Calu3 (cell line): ENCODE measurements at regions of chr20 and their contacts with region 1.

Region 1: GRCh38 chr20:5788385-5788895 is 38.2 kb downstream of the SHLD1 start:
- DNase-seq: peak; percentile 66
- H3K4me3 Mint-ChIP-seq: no peak overlapping the region
- H3K27ac Mint-ChIP-seq: no peak overlapping the region
- H3K4me1 Mint-ChIP-seq: no peaks in the 10 kb centered on the region
- H3K27me3 Mint-ChIP-seq: no peaks in the 10 kb centered on the region
- CTCF ChIP-seq: peak; percentile 66

Region 2: GRCh38 chr20:5529331-5530148 is 258.9 kb before region 1 on chr20:
- CTCF ChIA-PET with region 1: interaction called, 3 read pairs
- intact Hi-C with region 1: loop called (anchors 2 kb)
- DNase-seq: peak; percentile 82
- H3K4me3 Mint-ChIP-seq: peak overlapping the region; percentile 40
- H3K27ac Mint-ChIP-seq: no peak overlapping the region
- H3K4me1 Mint-ChIP-seq: peaks cover 8% of the 10 kb centered on the region
- H3K27me3 Mint-ChIP-seq: no peaks in the 10 kb centered on the region
- CTCF ChIP-seq: peak; percentile 37

Region 3: DNA sequence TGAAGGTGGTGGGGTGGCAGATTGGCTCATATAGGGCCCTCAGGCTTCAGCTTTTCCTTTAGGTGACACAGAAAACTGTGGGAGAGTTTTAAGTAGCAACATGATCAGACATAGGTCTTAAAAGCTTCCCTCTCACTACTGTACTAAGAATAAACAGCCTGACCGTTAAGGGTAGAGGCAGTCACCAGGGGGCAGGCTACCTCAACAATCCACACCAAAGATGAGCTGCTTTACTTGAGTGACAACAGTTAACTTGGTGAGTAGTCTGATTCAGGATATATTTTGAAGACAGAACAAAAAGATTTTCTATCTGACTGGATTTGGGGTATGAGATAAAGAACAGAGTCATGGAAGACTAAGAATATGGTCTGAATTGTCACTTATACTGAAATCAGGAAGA is 231.3 kb before region 1 on chr20:
- CTCF ChIA-PET with region 1: interaction called, 17 read pairs
- intact Hi-C with region 1: loop called (anchors 1 kb)
- DNase-seq: peak; percentile 48
- H3K4me3 Mint-ChIP-seq: no peak overlapping the region
- H3K27ac Mint-ChIP-seq: no peak overlapping the region
- H3K4me1 Mint-ChIP-seq: no peaks in the 10 kb centered on the region
- H3K27me3 Mint-ChIP-seq: no peaks in the 10 kb centered on the region
- CTCF ChIP-seq: no peak

Region 4: GRCh38 chr20:5569021-5569420 is 219.4 kb before region 1 on chr20:
- CTCF ChIA-PET with region 1: interaction called, 4 read pairs
- intact Hi-C with region 1: loop called (anchors 1 kb)
- DNase-seq: peak; percentile 53
- H3K4me3 Mint-ChIP-seq: no peak overlapping the region
- H3K27ac Mint-ChIP-seq: no peak overlapping the region
- H3K4me1 Mint-ChIP-seq: no peaks in the 10 kb centered on the region
- H3K27me3 Mint-ChIP-seq: no peaks in the 10 kb centered on the region
- CTCF ChIP-seq: no peak

Region 5: GRCh38 chr20:5844063-5844681 is 55.7 kb after region 1 on chr20:
- CTCF ChIA-PET with region 1: no interaction called
- intact Hi-C with region 1: no loop called
- DNase-seq: no peak
- H3K4me3 Mint-ChIP-seq: no peak overlapping the region
- H3K27ac Mint-ChIP-seq: no peak overlapping the region
- H3K4me1 Mint-ChIP-seq: peaks cover 8% of the 10 kb centered on the region
- H3K27me3 Mint-ChIP-seq: no peaks in the 10 kb centered on the region
- CTCF ChIP-seq: no peak